CD8-positive, alpha-beta T cell (primary cell): ENCODE measurements at regions of chr12 and their contacts with region 1.

Region 1: DNA sequence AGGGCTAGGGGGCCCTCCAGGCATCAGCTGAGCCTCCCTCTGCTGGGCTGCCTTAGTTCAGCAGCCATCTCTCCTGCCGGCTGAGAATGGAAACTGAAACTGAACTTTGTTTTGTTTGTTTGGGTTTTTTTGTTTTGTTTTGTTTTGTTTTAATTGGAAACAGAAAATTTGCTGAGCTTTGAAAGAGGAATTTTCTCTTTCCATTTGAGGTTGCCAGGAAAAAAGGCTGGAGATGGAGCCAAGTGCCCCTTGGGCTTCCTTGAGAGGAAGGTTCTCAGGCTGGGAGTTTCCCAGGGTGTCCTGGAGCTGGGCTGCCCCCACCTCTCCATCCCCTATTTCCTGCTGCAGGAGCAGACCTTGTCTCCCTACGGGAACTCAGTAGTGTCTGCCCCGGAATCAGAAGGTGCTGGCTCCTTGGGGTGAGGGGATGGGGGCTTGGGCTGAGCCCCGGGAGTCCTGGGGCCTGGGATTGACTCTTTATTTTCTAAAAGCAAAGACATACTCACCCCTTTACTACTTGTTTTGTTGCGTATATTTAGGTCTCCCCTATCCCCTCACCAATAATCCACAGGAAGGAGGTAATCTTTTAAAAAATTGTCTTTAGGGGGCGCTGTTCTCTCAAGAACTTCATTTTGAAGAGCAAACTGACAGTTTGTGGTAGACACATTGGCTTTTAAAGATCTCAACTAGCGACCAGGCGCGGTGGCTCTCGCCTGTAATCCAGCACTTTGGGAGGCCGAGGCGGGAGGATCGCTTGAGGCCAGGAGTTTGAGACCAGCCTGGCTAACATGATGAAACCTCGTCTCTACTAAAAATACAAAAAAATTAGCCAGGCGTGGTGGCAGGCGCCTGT is 21.3 kb upstream of the OASL start:
- DNase-seq: peak; percentile 33 to 89 (median 63)
- ATAC-seq: peak; percentile 97
- H3K4me3 ChIP-seq: peak overlapping the region; percentile 59 to 68
- H3K4me3 Mint-ChIP-seq: peak overlapping the region; percentile 84
- H3K27ac ChIP-seq: peak overlapping the region; percentile 69 to 97
- H3K27ac Mint-ChIP-seq: peak overlapping the region; percentile 92
- H3K4me1 ChIP-seq: peaks cover 11% of the 10 kb centered on the region
- H3K4me1 Mint-ChIP-seq: peaks cover 12% of the 10 kb centered on the region
- H3K27me3 ChIP-seq: no peaks in the 10 kb centered on the region
- H3K27me3 Mint-ChIP-seq: no peaks in the 10 kb centered on the region
- CTCF ChIP-seq: peak; percentile 64

Region 2: GRCh38 chr12:120797677-120798642 is 262.4 kb before region 1 on chr12:
- CTCF ChIA-PET with region 1: no interaction called
- POLR2A ChIA-PET with region 1: no interaction called
- intact Hi-C with region 1: no loop called
- DNase-seq: no peak
- ATAC-seq: no peak
- H3K4me3 ChIP-seq: no peak overlapping the region
- H3K4me3 Mint-ChIP-seq: no peak overlapping the region
- H3K27ac ChIP-seq: no peak overlapping the region
- H3K27ac Mint-ChIP-seq: no peak overlapping the region
- H3K4me1 ChIP-seq: no peaks in the 10 kb centered on the region
- H3K4me1 Mint-ChIP-seq: peaks cover 34% of the 10 kb centered on the region
- H3K27me3 ChIP-seq: no peaks in the 10 kb centered on the region
- H3K27me3 Mint-ChIP-seq: no peaks in the 10 kb centered on the region
- CTCF ChIP-seq: no peak

Region 3: DNA sequence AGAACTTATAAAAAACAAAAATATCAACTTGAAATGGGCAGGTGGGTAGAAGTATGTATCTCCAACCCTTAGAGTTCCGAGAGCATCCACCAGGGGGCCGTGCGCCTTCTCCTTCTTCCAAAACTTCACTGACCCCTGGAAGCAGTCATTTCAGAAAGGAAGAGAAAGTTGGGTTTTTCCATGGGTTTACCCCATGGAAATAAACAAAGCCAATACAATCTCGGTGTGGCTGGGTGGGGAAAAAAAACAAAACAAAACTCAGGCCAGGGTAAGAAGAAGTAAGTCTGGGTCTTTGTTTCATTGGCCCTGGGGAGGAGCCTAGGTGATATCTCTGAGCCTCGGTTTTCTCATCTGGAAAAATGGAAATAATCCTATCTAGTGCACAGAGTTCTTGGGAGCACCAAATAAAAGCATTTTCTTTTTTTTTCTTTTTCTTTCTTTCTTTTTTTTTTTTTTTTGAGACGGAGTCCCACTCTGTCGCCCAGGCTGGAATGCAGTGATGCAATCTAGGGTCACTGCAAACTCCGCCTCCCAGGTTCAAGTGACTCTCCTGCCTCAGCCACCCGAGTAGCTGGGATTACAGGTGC is 115.6 kb before region 1 on chr12:
- CTCF ChIA-PET with region 1: interaction called, 3 read pairs
- POLR2A ChIA-PET with region 1: no interaction called
- intact Hi-C with region 1: loop called in 1 of 2 experiments (anchors 1 kb)
- DNase-seq: peak; percentile 21 to 75 (median 65)
- ATAC-seq: peak; percentile 69
- H3K4me3 ChIP-seq: no peak overlapping the region
- H3K4me3 Mint-ChIP-seq: no peak overlapping the region
- H3K27ac ChIP-seq: no peak overlapping the region
- H3K27ac Mint-ChIP-seq: no peak overlapping the region
- H3K4me1 ChIP-seq: no peaks in the 10 kb centered on the region
- H3K4me1 Mint-ChIP-seq: peaks cover 4% of the 10 kb centered on the region
- H3K27me3 ChIP-seq: no peaks in the 10 kb centered on the region
- H3K27me3 Mint-ChIP-seq: no peaks in the 10 kb centered on the region
- CTCF ChIP-seq: peak; percentile 80

Region 4: GRCh38 chr12:121015825-121016766 is 44.3 kb before region 1 on chr12 and contains the start of gene C12orf43:
- CTCF ChIA-PET with region 1: interaction called, 12 read pairs
- POLR2A ChIA-PET with region 1: interaction called, 4 read pairs
- intact Hi-C with region 1: loop called (anchors 1 to 5 kb)
- DNase-seq: peak; percentile 83 to 95 (median 92)
- ATAC-seq: peak; percentile 97
- H3K4me3 ChIP-seq: peak within 1 kb of the TSS; percentile 69 to 91
- H3K4me3 Mint-ChIP-seq: peak within 1 kb of the TSS; percentile 93
- H3K27ac ChIP-seq: peak within 1 kb of the TSS; percentile 60 to 89
- H3K27ac Mint-ChIP-seq: peak within 1 kb of the TSS; percentile 93
- H3K4me1 ChIP-seq: peaks cover 8% of the 10 kb centered on the region
- H3K4me1 Mint-ChIP-seq: peaks cover 21% of the 10 kb centered on the region
- H3K27me3 ChIP-seq: no peaks in the 10 kb centered on the region
- H3K27me3 Mint-ChIP-seq: no peaks in the 10 kb centered on the region
- CTCF ChIP-seq: no peak
- total RNA-seq, gene C12orf43: 20.7 to 21.4 TPM

Region 5: DNA sequence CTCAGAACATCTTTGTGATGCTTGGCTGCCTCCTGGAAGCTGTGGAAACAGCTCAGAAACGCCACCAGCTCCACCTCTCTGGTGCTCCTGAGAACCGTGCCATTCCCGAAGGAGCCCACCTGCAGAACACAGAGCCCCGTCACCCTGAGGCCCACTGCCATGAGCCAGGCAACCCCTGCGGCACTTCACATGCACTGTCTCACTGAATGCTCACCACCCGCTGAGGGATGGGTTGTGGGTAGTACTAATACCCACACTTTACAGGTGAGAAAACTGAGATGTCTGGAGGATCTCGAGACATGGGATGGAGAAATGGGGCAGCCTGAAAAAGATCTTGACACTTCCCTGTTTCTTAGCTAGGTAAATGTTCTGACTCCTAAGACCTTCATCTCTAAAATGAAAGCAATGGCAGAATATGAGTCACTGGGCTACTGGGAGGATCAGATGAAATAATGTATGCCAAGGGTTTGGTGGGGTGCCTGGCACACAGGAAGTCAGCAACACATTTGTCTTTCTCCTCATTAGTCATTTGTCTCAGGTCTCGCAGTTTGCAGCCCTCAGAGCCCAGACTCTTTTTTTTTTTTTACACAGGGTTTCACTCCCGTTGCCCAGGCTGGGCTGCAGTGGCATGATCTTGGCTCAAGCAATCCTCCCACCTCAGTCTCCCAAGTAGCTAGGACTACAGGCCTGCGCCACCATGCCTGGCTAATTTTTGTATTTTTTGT is 26.6 kb before region 1 on chr12:
- CTCF ChIA-PET with region 1: interaction called, 12 read pairs
- POLR2A ChIA-PET with region 1: interaction called, 5 read pairs
- intact Hi-C with region 1: loop called (anchors 1 to 2 kb)
- DNase-seq: peak in 8 of 9 experiments; percentile 29 to 93 (median 66)
- ATAC-seq: peak; percentile 78
- H3K4me3 ChIP-seq: peak overlapping the region in 1 of 2 experiments; percentile 35
- H3K4me3 Mint-ChIP-seq: peak overlapping the region; percentile 43
- H3K27ac ChIP-seq: peak overlapping the region; percentile 25 to 87
- H3K27ac Mint-ChIP-seq: peak overlapping the region; percentile 85
- H3K4me1 ChIP-seq: peaks cover 58% of the 10 kb centered on the region
- H3K4me1 Mint-ChIP-seq: peaks cover 51% of the 10 kb centered on the region
- H3K27me3 ChIP-seq: no peaks in the 10 kb centered on the region
- H3K27me3 Mint-ChIP-seq: no peaks in the 10 kb centered on the region
- CTCF ChIP-seq: no peak

Region 6: GRCh38 chr12:121095544-121096198 is 35.3 kb after region 1 on chr12:
- CTCF ChIA-PET with region 1: interaction called, 109 read pairs
- POLR2A ChIA-PET with region 1: interaction called, 5 read pairs
- intact Hi-C with region 1: loop called (anchors 1 kb)
- DNase-seq: peak; percentile 59 to 88 (median 81)
- ATAC-seq: peak; percentile 78
- H3K4me3 ChIP-seq: peak overlapping the region; percentile 44 to 47
- H3K4me3 Mint-ChIP-seq: peak overlapping the region; percentile 81
- H3K27ac ChIP-seq: no peak overlapping the region
- H3K27ac Mint-ChIP-seq: no peak overlapping the region
- H3K4me1 ChIP-seq: peaks cover 47% of the 10 kb centered on the region
- H3K4me1 Mint-ChIP-seq: peaks cover 49% of the 10 kb centered on the region
- H3K27me3 ChIP-seq: no peaks in the 10 kb centered on the region
- H3K27me3 Mint-ChIP-seq: no peaks in the 10 kb centered on the region
- CTCF ChIP-seq: peak; percentile 81

Region 7: DNA sequence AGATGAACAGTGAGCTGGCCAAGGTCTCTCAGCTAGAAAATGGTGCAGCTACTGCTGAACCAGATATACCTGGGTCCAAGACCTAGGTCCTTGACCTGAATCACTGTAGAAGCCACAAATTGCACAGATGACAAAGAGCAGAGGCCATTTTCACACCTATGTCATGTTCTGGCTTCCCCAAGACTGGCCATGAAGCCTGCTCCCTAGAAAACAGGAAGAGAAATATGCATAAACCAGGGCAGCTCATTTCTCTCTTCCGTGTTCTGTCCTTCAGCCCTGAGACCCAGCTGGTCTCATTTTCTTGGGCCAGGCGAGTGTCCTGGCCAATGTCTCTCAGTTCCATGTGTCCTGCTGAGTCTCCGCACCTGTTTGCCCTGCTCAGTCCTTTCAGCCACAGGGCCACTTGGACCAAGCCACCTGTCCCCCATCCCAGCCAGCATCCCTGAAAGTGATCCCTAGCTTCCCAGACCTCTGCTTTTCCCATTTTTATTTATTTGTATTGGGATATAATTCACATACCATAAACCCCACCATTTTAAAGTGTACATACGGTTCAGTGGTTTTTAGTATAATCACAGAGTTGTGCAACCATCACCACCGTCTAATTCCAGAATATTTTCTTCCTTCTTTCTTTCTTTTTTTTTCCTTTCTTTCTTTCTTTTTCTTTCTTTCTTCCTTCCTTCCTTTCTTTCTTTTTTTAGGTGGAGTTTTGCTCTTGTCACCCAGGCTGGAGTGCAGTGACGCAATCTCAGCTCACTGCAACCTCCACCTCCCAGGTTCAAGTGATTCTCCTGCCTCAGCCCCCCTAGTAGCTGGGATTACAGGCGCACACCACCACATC is 99.3 kb after region 1 on chr12:
- CTCF ChIA-PET with region 1: no interaction called
- POLR2A ChIA-PET with region 1: no interaction called
- intact Hi-C with region 1: no loop called
- DNase-seq: no peak
- ATAC-seq: no peak
- H3K4me3 ChIP-seq: no peak overlapping the region
- H3K4me3 Mint-ChIP-seq: no peak overlapping the region
- H3K27ac ChIP-seq: no peak overlapping the region
- H3K27ac Mint-ChIP-seq: peak overlapping the region; percentile 22
- H3K4me1 ChIP-seq: no peaks in the 10 kb centered on the region
- H3K4me1 Mint-ChIP-seq: no peaks in the 10 kb centered on the region
- H3K27me3 ChIP-seq: no peaks in the 10 kb centered on the region
- H3K27me3 Mint-ChIP-seq: no peaks in the 10 kb centered on the region
- CTCF ChIP-seq: no peak

Region 8: DNA sequence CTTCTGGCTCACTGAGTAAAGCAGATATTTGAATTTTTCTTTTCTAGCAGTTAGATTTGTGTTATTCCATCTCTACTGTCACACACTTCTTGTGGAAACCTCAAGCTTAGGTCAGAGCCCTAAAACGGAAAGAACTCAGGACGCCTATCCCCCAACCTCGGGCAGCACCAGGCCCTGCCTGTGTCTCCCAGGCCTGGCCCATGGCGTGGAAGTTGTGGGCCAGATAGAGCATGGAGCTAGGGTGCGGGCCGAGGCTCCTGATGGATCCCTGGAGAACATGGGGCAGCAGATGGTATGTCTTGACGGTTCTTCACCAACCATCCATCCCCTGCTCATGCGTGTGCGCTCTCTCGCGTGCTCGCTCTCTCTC is 170.1 kb after region 1 on chr12:
- CTCF ChIA-PET with region 1: interaction called, 13 read pairs
- POLR2A ChIA-PET with region 1: no interaction called
- intact Hi-C with region 1: no loop called
- DNase-seq: no peak
- ATAC-seq: no peak
- H3K4me3 ChIP-seq: no peak overlapping the region
- H3K4me3 Mint-ChIP-seq: no peak overlapping the region
- H3K27ac ChIP-seq: no peak overlapping the region
- H3K27ac Mint-ChIP-seq: no peak overlapping the region
- H3K4me1 ChIP-seq: peaks cover 31% of the 10 kb centered on the region
- H3K4me1 Mint-ChIP-seq: peaks cover 21% of the 10 kb centered on the region
- H3K27me3 ChIP-seq: no peaks in the 10 kb centered on the region
- H3K27me3 Mint-ChIP-seq: no peaks in the 10 kb centered on the region
- CTCF ChIP-seq: no peak